CD4-positive, alpha-beta memory T cell (primary cell): ENCODE measurements at regions of chr9 and their contacts with region 1.

Region 1: DNA sequence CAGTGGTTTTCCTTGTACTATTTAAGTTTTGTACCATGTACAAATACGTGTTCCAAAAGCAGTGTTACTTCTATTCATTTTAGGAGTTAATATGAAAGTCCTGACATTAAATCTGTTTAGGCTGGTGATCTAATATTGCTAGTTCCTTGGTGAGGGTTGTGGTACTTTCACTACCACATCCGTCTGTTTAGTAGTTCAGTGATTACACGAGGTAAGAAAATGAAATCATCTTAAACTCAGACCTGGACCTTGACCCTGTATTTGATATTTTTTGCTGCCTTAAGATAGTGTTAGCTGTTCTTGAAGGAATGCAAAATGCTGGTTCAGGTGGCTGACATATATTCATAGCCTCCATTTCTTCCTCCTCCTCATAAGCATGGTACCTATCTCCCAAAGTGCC is 50.3 kb downstream of the MTAP start:
- DNase-seq: peak in 1 of 5 donors; percentile 10
- H3K4me3 ChIP-seq: no peak overlapping the region
- H3K4me3 Mint-ChIP-seq: no peak overlapping the region
- H3K27ac ChIP-seq: no peak overlapping the region
- H3K27ac Mint-ChIP-seq: peak overlapping the region in 6 of 7 donors; percentile 4 to 55 (median 28)
- H3K4me1 ChIP-seq: peaks cover 15% of the 10 kb centered on the region
- H3K4me1 Mint-ChIP-seq: peaks cover 32 to 56% (median 38%) of the 10 kb centered on the region in 4 donors
- H3K27me3 ChIP-seq: no peaks in the 10 kb centered on the region
- H3K27me3 Mint-ChIP-seq: no peaks in the 10 kb centered on the region

Region 2: DNA sequence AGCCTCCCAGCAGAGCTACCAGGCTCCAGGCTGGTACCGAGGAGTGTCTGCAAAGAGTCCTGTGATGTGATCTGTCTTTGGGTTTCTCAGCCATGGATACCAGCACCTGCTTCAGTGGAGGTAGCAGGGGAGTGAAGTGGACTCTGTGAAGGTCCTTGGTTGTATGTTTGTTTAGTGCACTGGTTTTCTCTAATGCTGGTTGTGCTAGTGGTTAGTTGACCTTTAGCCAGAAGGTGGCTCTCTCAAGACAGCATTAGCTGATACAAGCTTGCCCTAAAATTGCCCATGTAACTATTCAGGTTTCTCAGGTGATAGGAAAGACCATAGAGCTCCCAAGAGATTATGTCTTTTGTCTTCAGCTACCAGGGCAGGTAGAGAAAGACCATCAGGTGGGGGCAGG is 36.9 kb after region 1 on chr9:
- CTCF ChIA-PET with region 1: no interaction called
- POLR2A ChIA-PET with region 1: no interaction called
- intact Hi-C with region 1: loop called (anchors 5 kb)
- DNase-seq: no peak
- H3K4me3 ChIP-seq: no peak overlapping the region
- H3K4me3 Mint-ChIP-seq: no peak overlapping the region
- H3K27ac ChIP-seq: no peak overlapping the region
- H3K27ac Mint-ChIP-seq: no peak overlapping the region
- H3K4me1 ChIP-seq: no peaks in the 10 kb centered on the region
- H3K4me1 Mint-ChIP-seq: peaks cover 0 to 4% (median 0%) of the 10 kb centered on the region in 4 donors
- H3K27me3 ChIP-seq: no peaks in the 10 kb centered on the region
- H3K27me3 Mint-ChIP-seq: no peaks in the 10 kb centered on the region

Region 3: GRCh38 chr9:21902136-21902535 is 49.4 kb after region 1 on chr9:
- CTCF ChIA-PET with region 1: no interaction called
- POLR2A ChIA-PET with region 1: no interaction called
- intact Hi-C with region 1: loop called (anchors 5 kb)
- DNase-seq: no peak
- H3K4me3 ChIP-seq: no peak overlapping the region
- H3K4me3 Mint-ChIP-seq: no peak overlapping the region
- H3K27ac ChIP-seq: no peak overlapping the region
- H3K27ac Mint-ChIP-seq: no peak overlapping the region
- H3K4me1 ChIP-seq: no peaks in the 10 kb centered on the region
- H3K4me1 Mint-ChIP-seq: no peaks in the 10 kb centered on the region
- H3K27me3 ChIP-seq: no peaks in the 10 kb centered on the region
- H3K27me3 Mint-ChIP-seq: no peaks in the 10 kb centered on the region

Region 4: DNA sequence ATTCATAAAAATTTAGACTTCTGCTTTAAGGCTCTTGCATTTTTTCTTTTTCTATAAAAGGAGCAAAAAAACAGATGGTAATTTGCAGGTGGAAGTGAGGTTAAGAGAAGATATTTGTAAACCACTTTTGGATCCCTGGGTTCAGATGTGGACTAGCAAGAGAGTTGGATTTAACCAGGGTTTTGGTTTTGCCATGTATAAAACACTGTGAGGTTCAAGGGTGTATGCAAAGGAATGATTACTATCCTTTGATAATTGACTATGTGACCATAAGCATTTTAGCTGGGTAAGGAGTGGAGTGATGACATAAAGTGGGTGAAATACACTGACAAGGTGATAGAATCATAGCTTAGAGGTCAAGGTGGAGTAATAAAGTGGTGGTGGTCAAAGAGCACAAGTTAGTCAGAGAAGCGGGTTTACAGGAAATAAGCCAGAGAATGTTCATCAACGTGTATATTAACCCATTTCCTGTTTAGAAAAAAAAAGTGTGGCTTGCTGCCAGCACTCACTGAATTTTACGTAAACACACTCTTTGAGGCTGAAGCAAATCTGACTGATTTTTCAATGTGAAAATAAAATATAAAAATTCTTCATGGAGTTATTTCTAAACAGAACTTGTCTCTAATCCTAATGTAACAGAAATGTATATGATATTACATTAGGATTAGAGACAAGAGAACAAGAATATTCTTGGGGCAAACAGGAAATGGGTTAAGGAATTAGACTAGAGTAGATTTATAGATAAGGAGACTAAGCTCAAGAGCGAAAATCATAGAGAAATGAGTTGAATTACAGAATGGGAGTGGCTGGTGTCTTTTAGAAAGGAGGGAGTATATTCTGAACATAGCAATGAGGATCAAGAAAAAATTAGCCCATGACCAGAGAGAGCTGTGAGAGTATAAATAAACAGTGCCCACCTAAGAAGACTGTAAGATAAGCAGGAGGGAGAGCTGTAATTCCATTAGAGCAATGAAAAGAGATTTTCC is 66.9 kb after region 1 on chr9:
- CTCF ChIA-PET with region 1: no interaction called
- POLR2A ChIA-PET with region 1: no interaction called
- intact Hi-C with region 1: loop called (anchors 5 kb)
- DNase-seq: peak; percentile 51 to 79 (median 75)
- H3K4me3 ChIP-seq: peak overlapping the region in 1 of 2 donors; percentile 22
- H3K4me3 Mint-ChIP-seq: peak overlapping the region; percentile 4 to 76 (median 63)
- H3K27ac ChIP-seq: no peak overlapping the region
- H3K27ac Mint-ChIP-seq: peak overlapping the region; percentile 58 to 96 (median 85)
- H3K4me1 ChIP-seq: peaks cover 31% of the 10 kb centered on the region
- H3K4me1 Mint-ChIP-seq: peaks cover 21 to 43% (median 35%) of the 10 kb centered on the region in 4 donors
- H3K27me3 ChIP-seq: no peaks in the 10 kb centered on the region
- H3K27me3 Mint-ChIP-seq: no peaks in the 10 kb centered on the region